IMR-90 (cell line): ENCODE measurements at regions of chr5 and their contacts with region 1.

Region 1: GRCh38 chr5:114176356-114176755 is 185.5 kb upstream of the KCNN2 start:
- DNase-seq: peak; percentile 67
- ATAC-seq: peak; percentile 86
- H3K4me3 ChIP-seq: no peak overlapping the region
- H3K27ac ChIP-seq: no peak overlapping the region
- H3K4me1 ChIP-seq: peaks cover 6% of the 10 kb centered on the region
- H3K27me3 ChIP-seq: no peaks in the 10 kb centered on the region
- CTCF ChIP-seq: no peak
- POLR2A ChIP-seq: no peak
- RAD21 ChIP-seq: no peak

Region 2: GRCh38 chr5:114243281-114243988 is 67.1 kb after region 1 on chr5:
- CTCF ChIA-PET with region 1: no interaction called
- POLR2A ChIA-PET with region 1: no interaction called
- dilution Hi-C with region 1: no loop called
- in situ Hi-C with region 1: no loop called
- intact Hi-C with region 1: loop called (anchors 5 kb)
- DNase-seq: peak; percentile 97
- ATAC-seq: peak; percentile 89
- H3K4me3 ChIP-seq: peak overlapping the region; percentile 7; the same call in 1 of the 2 replicates
- H3K27ac ChIP-seq: peak overlapping the region; percentile 91
- H3K4me1 ChIP-seq: peaks cover 6% of the 10 kb centered on the region; the same call in 1 of the 2 replicates
- H3K27me3 ChIP-seq: no peaks in the 10 kb centered on the region
- CTCF ChIP-seq: no peak
- POLR2A ChIP-seq: no peak
- RAD21 ChIP-seq: no peak

Region 3: DNA sequence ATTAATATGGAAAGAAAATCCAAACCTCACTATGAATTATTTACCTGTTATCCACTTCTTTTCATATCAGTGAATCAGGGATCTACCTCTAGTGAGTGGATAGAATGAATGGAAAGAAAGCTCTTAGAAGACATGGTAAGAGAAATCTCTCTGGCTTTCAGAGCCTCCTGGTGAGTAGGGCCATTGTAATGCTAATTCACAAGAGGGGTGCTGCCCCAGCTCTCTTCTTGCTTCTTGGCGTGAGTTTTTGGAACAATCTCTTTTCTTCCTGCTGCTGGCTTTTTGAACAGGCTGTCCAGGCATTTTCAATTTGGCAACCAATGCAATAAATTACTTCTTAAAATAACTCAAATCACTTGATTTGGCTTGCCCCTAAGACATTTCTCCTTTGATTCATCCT is 135.6 kb after region 1 on chr5:
- CTCF ChIA-PET with region 1: no interaction called
- POLR2A ChIA-PET with region 1: no interaction called
- dilution Hi-C with region 1: no loop called
- in situ Hi-C with region 1: no loop called
- intact Hi-C with region 1: no loop called
- DNase-seq: no peak
- ATAC-seq: no peak
- H3K4me3 ChIP-seq: no peak overlapping the region
- H3K27ac ChIP-seq: no peak overlapping the region
- H3K4me1 ChIP-seq: peaks cover 3% of the 10 kb centered on the region; the same call in 1 of the 2 replicates
- H3K27me3 ChIP-seq: no peaks in the 10 kb centered on the region
- CTCF ChIP-seq: no peak
- POLR2A ChIP-seq: no peak
- RAD21 ChIP-seq: no peak

Region 4: DNA sequence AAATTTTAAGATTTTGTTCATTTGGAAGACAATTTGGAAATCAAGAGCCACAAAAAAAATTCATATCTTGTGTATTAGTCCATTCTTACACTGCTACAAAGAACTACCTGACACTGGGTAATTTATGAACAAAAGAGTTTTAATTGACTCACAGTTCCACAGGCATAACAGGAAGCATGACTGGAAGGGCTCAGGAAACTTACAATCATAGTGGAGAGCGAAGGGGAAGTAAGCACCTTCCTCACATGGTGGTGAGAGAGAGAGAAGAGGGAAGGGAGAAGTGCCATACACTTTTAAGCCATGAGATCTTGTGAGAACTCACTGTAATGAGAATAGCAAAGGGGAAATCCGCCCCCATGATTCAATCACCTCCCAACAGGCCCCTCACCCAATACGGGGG is 459.9 kb after region 1 on chr5:
- CTCF ChIA-PET with region 1: no interaction called
- POLR2A ChIA-PET with region 1: no interaction called
- dilution Hi-C with region 1: no loop called
- in situ Hi-C with region 1: no loop called
- intact Hi-C with region 1: no loop called
- DNase-seq: no peak
- ATAC-seq: no peak
- H3K4me3 ChIP-seq: no peak overlapping the region
- H3K27ac ChIP-seq: no peak overlapping the region
- H3K4me1 ChIP-seq: no peaks in the 10 kb centered on the region
- H3K27me3 ChIP-seq: no peaks in the 10 kb centered on the region
- CTCF ChIP-seq: no peak
- POLR2A ChIP-seq: no peak
- RAD21 ChIP-seq: no peak